HepG2 (cell line): ENCODE measurements at regions of chr5 and their contacts with region 1.

Region 1: DNA sequence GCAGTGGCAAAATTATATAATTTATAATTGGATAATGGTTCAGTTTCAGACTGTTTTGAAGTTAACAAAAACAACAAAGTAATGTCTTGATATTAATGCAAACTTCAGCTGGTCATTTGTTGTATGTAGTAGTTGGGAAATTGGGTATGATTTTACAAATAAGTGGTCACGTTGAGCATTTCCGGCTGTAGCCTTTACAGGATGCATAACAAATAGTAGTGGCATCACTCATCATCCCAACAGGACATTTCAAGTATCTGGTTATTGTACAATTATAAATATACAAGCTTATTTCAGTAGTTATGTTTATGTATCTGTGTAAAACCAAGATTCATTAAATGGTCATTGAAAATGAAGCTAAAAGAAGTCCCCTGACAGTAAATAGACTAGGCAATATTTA is 72.9 kb downstream of the SMIM15 start:
- DNase-seq: no peak
- ATAC-seq: no peak
- H3K4me3 ChIP-seq: no peak overlapping the region
- H3K27ac ChIP-seq: no peak overlapping the region
- H3K4me1 ChIP-seq: no peaks in the 10 kb centered on the region
- H3K27me3 ChIP-seq: no peaks in the 10 kb centered on the region
- CTCF ChIP-seq: no peak
- EP300 ChIP-seq: no peak
- POLR2A ChIP-seq: no peak
- RAD21 ChIP-seq: no peak

Region 2: GRCh38 chr5:59685793-59686192 is 1403.6 kb before region 1 on chr5:
- CTCF ChIA-PET with region 1: no interaction called
- POLR2A ChIA-PET with region 1: no interaction called
- in situ Hi-C with region 1: no loop called
- intact Hi-C with region 1: no loop called
- DNase-seq: no peak
- ATAC-seq: no peak
- H3K4me3 ChIP-seq: no peak overlapping the region
- H3K27ac ChIP-seq: no peak overlapping the region
- H3K4me1 ChIP-seq: no peaks in the 10 kb centered on the region
- H3K27me3 ChIP-seq: no peaks in the 10 kb centered on the region
- CTCF ChIP-seq: no peak
- EP300 ChIP-seq: no peak
- POLR2A ChIP-seq: no peak
- RAD21 ChIP-seq: no peak

Region 3: GRCh38 chr5:60959156-60959555 is 130.2 kb before region 1 on chr5:
- CTCF ChIA-PET with region 1: no interaction called
- POLR2A ChIA-PET with region 1: no interaction called
- in situ Hi-C with region 1: no loop called
- intact Hi-C with region 1: no loop called
- DNase-seq: no peak
- ATAC-seq: no peak
- H3K4me3 ChIP-seq: no peak overlapping the region
- H3K27ac ChIP-seq: no peak overlapping the region
- H3K4me1 ChIP-seq: no peaks in the 10 kb centered on the region
- H3K27me3 ChIP-seq: no peaks in the 10 kb centered on the region
- CTCF ChIP-seq: no peak
- EP300 ChIP-seq: no peak
- POLR2A ChIP-seq: no peak
- RAD21 ChIP-seq: no peak

Region 4: DNA sequence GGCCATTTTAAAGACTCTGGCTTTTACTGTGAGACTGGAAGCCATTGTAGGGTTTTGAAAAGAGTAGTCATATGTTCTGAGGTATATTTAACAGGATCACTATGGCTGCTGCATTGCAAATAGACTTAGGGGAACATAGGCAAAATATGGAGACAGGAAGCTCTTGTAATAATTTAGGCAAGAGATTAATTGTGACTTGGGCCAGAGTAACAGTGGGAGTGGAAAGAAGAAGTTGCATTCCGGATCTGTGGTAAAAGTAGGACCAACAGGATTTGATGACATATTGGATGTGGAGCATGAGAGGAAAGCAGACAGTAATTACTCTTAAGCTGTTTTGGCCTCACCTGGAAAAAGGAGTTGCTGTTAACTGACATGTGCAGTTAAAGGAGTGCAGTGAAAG is 12.7 kb before region 1 on chr5:
- CTCF ChIA-PET with region 1: no interaction called
- POLR2A ChIA-PET with region 1: no interaction called
- in situ Hi-C with region 1: no loop called
- intact Hi-C with region 1: loop called (anchors 2 kb)
- DNase-seq: no peak
- ATAC-seq: no peak
- H3K4me3 ChIP-seq: no peak overlapping the region
- H3K27ac ChIP-seq: no peak overlapping the region
- H3K4me1 ChIP-seq: peaks cover 19% of the 10 kb centered on the region
- H3K27me3 ChIP-seq: no peaks in the 10 kb centered on the region; a peak in 1 of 5 replicates
- CTCF ChIP-seq: no peak
- EP300 ChIP-seq: no peak
- POLR2A ChIP-seq: no peak
- RAD21 ChIP-seq: no peak